Heart left ventricle (tissue), 16 donors: ENCODE measurements at regions of chr6 and their contacts with region 1.

Region 1: GRCh38 chr6:30752157-30752927 is 8.0 kb upstream of the IER3 start:
- DNase-seq: peak; percentile 93 to 98 (median 96)
- ATAC-seq: peak; percentile 92 to 96 (median 96)
- H3K4me3 ChIP-seq: peak overlapping the region in 1 of 12 donors; percentile 8
- H3K27ac ChIP-seq: peak overlapping the region; percentile 83 to 98 (median 92)
- H3K4me1 ChIP-seq: peaks cover 0 to 71% (median 20%) of the 10 kb centered on the region in 12 donors
- H3K27me3 ChIP-seq: no peaks in the 10 kb centered on the region
- CTCF ChIP-seq: peak in 4 of 12 donors; percentile 8 to 37 (median 20)
- POLR2A ChIP-seq: peak in 1 of 2 donors; percentile 28

Region 2: DNA sequence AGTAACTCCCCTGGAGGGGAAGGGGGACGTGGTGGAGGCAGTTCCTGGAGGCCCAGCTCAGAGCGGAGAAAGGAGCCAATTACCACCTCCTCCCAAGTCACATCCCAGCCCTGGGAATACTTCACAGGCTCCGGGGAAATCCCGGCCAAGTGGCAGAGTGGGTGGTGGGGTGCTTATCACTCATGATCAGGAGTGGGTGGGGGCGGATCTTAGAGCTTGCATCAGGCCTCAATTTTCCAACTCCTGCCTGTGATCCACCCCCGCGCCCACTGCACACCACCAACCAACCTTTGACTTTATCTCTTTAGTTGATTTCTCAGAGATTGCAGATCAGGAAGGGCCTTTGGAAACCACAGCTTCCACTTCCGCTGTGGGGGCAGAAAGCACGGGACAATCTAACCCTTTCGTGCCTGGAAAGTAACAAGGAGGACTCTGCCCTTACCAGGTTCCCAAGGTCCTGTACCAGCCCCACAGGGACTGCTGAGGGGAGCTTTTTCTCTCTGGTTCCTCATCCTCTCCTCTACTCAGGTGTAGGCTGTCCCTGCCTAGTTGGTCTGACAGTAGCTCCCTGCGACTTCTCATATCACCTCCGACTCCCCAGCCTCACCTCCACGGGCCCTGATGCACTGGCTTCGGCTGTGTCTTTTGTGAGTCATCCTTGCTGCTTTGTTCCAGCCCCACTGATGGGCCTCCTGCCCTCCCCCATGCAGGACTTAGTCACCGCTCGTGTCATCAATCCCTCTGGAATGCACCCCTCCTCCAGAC is 16.9 kb after region 1 on chr6:
- intact Hi-C with region 1: loop called in 1 of 10 experiments (anchors 2 kb)
- DNase-seq: peak in 4 of 5 donors; percentile 32 to 87 (median 52)
- ATAC-seq: peak in 3 of 4 donors; percentile 88 to 93 (median 90)
- H3K4me3 ChIP-seq: peak overlapping the region in 1 of 12 donors; percentile 2
- H3K27ac ChIP-seq: peak overlapping the region in 10 of 12 donors; percentile 19 to 79 (median 58)
- H3K4me1 ChIP-seq: peaks cover 4 to 53% (median 28%) of the 10 kb centered on the region in 12 donors
- H3K27me3 ChIP-seq: no peaks in the 10 kb centered on the region
- CTCF ChIP-seq: no peak
- POLR2A ChIP-seq: no peak

Region 3: GRCh38 chr6:30781743-30782424 is 29.5 kb after region 1 on chr6:
- intact Hi-C with region 1: loop called in 1 of 10 experiments (anchors 2 kb)
- DNase-seq: peak; percentile 97 to 98 (median 97)
- ATAC-seq: peak; percentile 87 to 96 (median 92)
- H3K4me3 ChIP-seq: peak overlapping the region in 10 of 12 donors; percentile 0 to 32 (median 18)
- H3K27ac ChIP-seq: peak overlapping the region; percentile 72 to 97 (median 94)
- H3K4me1 ChIP-seq: peaks cover 0 to 96% (median 44%) of the 10 kb centered on the region in 12 donors
- H3K27me3 ChIP-seq: no peaks in the 10 kb centered on the region
- CTCF ChIP-seq: no peak
- POLR2A ChIP-seq: peak in 1 of 2 donors; percentile 51